Right ventricle myocardium inferior (tissue), 1 donor: ENCODE measurements at regions of chrX and their contacts with region 1.

Region 1: DNA sequence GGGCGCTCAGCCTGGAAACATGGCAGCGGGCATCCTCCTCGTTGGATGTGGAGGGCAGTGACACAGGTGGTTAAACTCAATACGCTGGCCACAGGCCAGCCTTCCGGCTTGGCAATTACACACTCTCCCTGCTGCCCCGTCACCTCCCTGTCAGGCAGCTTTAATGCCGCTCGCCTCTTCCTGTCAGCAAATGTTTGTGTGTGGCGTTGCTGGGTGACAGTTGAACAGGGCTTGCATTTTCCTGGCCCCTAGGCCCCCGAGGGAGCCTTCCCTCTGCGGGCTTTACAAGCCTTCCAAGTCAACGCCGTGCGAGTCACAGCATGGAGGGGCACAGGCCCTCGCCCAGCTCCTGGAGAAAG is 620.0 kb downstream of the BCOR start:
- DNase-seq: peak; percentile 92
- ATAC-seq: peak; percentile 87

Region 2: GRCh38 chrX:39253551-39253950 is 224.2 kb before region 1 on chrX:
- intact Hi-C with region 1: no loop called
- DNase-seq: no peak
- ATAC-seq: no peak

Region 3: DNA sequence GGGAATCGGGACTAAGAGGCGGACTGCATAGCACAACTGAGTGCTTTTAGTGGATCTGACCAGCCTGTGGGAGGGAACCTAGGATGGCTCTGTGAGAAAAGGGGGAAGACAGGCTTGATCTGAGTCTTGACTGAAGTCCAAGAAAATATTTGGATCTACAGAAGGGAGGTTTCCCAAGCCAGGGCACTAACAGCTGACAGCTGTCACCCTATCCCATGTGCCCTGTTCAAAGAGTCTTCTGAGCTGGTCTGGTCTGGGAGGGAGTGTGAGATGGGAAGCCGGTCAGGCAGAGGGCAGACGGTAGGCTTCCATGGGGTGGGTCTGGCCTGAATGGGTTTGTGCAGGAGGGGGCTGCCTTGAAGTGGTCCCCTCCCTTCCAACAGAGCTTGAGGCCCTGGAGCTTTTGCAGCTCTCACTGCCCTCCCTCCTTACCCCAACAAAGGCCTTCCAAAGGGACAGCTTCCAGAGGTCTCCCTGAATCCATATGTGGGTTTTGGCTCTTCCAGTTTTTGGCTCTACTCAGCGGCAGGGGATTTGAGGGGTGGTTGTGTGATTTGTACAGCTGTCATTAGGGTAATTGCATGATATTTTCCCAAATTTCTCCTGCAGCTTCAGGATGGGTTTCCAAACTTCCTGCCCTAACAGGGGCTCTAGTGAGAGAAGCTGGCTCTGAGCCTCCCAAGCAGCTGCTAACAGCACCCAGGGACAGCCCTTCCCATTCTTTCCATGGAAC is 23.7 kb before region 1 on chrX:
- intact Hi-C with region 1: no loop called
- DNase-seq: no peak
- ATAC-seq: peak; percentile 80

Region 4: GRCh38 chrX:39519030-39519488 is 41.3 kb after region 1 on chrX:
- intact Hi-C with region 1: loop called (anchors 5 kb)
- DNase-seq: no peak
- ATAC-seq: peak; percentile 15

Region 5: GRCh38 chrX:39796856-39797255 is 319.1 kb after region 1 on chrX:
- intact Hi-C with region 1: no loop called
- DNase-seq: no peak
- ATAC-seq: no peak